CD14-positive monocyte (primary cell): ENCODE measurements at regions of chr17 and their contacts with region 1.

Region 1: GRCh38 chr17:4709794-4710692 is at the start of gene ARRB2:
- DNase-seq: peak; percentile 97 to 99 (median 98)
- H3K4me3 ChIP-seq: peak within 1 kb of the TSS; percentile 74 to 99 (median 93)
- H3K4me3 Mint-ChIP-seq: peak within 1 kb of the TSS; percentile 97 to 98
- H3K27ac ChIP-seq: peak within 1 kb of the TSS; percentile 93 to 98
- H3K27ac Mint-ChIP-seq: peak within 1 kb of the TSS; percentile 97 to 99 (median 99)
- H3K4me1 ChIP-seq: peaks cover 44 to 50% of the 10 kb centered on the region in 2 donors
- H3K4me1 Mint-ChIP-seq: peaks cover 46% of the 10 kb centered on the region
- H3K27me3 ChIP-seq: no peaks in the 10 kb centered on the region
- H3K27me3 Mint-ChIP-seq: peaks cover 0 to 4% (median 0%) of the 10 kb centered on the region in 3 donors
- CTCF ChIP-seq: peak; percentile 82
- polyA plus RNA-seq, gene ARRB2: 134 to 760 (median 150) TPM

Region 2: GRCh38 chr17:4648741-4649140 is 61.3 kb before region 1 on chr17:
- intact Hi-C with region 1: no loop called
- DNase-seq: peak in 1 of 3 donors; percentile 5
- H3K4me3 ChIP-seq: no peak overlapping the region
- H3K4me3 Mint-ChIP-seq: peak overlapping the region; percentile 25 to 46
- H3K27ac ChIP-seq: no peak overlapping the region
- H3K27ac Mint-ChIP-seq: no peak overlapping the region
- H3K4me1 ChIP-seq: peaks cover 32 to 39% of the 10 kb centered on the region in 2 donors
- H3K4me1 Mint-ChIP-seq: peaks cover 53% of the 10 kb centered on the region
- H3K27me3 ChIP-seq: peaks cover 7 to 13% of the 10 kb centered on the region in 2 donors
- H3K27me3 Mint-ChIP-seq: peaks cover 12 to 22% (median 19%) of the 10 kb centered on the region in 3 donors
- CTCF ChIP-seq: no peak

Region 3: DNA sequence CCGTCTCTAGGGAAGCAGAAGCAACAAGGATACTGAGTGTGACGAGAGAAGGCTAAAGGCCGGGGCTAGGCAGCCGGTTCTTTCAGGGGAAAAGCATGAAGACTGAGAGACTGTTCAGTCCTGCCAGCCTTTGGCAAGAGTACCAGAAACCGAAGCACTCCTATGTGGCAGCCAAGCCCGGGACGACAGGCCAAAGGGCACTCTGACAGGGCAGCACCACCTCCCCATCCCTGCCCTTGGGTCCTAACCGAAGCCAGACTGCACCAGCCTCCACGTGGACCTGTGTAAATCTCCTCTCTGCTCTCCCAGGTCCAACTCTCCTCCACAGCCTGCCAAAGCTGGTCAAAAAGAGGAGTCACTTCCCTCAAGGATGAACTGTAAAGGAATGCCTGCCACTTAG is 45.0 kb before region 1 on chr17:
- intact Hi-C with region 1: no loop called
- DNase-seq: no peak
- H3K4me3 ChIP-seq: no peak overlapping the region
- H3K4me3 Mint-ChIP-seq: no peak overlapping the region
- H3K27ac ChIP-seq: no peak overlapping the region
- H3K27ac Mint-ChIP-seq: no peak overlapping the region
- H3K4me1 ChIP-seq: no peaks in the 10 kb centered on the region
- H3K4me1 Mint-ChIP-seq: peaks cover 4% of the 10 kb centered on the region
- H3K27me3 ChIP-seq: peaks cover 0 to 6% of the 10 kb centered on the region in 2 donors
- H3K27me3 Mint-ChIP-seq: peaks cover 10 to 32% (median 13%) of the 10 kb centered on the region in 3 donors
- CTCF ChIP-seq: no peak

Region 4: GRCh38 chr17:4771519-4772234 is 61.6 kb after region 1 on chr17 and contains the start of gene TM4SF5:
- intact Hi-C with region 1: no loop called
- DNase-seq: no peak
- H3K4me3 ChIP-seq: no peak within 1 kb of the TSS
- H3K4me3 Mint-ChIP-seq: peak within 1 kb of the TSS in 1 of 2 donors; percentile 42
- H3K27ac ChIP-seq: peak within 1 kb of the TSS; percentile 51 to 98
- H3K27ac Mint-ChIP-seq: peak within 1 kb of the TSS; percentile 86 to 97 (median 94)
- H3K4me1 ChIP-seq: peaks cover 46 to 52% of the 10 kb centered on the region in 2 donors
- H3K4me1 Mint-ChIP-seq: peaks cover 45% of the 10 kb centered on the region
- H3K27me3 ChIP-seq: no peaks in the 10 kb centered on the region
- H3K27me3 Mint-ChIP-seq: peaks cover 4 to 31% (median 25%) of the 10 kb centered on the region in 3 donors
- CTCF ChIP-seq: no peak
- polyA plus RNA-seq, gene TM4SF5: not detected

Region 5: DNA sequence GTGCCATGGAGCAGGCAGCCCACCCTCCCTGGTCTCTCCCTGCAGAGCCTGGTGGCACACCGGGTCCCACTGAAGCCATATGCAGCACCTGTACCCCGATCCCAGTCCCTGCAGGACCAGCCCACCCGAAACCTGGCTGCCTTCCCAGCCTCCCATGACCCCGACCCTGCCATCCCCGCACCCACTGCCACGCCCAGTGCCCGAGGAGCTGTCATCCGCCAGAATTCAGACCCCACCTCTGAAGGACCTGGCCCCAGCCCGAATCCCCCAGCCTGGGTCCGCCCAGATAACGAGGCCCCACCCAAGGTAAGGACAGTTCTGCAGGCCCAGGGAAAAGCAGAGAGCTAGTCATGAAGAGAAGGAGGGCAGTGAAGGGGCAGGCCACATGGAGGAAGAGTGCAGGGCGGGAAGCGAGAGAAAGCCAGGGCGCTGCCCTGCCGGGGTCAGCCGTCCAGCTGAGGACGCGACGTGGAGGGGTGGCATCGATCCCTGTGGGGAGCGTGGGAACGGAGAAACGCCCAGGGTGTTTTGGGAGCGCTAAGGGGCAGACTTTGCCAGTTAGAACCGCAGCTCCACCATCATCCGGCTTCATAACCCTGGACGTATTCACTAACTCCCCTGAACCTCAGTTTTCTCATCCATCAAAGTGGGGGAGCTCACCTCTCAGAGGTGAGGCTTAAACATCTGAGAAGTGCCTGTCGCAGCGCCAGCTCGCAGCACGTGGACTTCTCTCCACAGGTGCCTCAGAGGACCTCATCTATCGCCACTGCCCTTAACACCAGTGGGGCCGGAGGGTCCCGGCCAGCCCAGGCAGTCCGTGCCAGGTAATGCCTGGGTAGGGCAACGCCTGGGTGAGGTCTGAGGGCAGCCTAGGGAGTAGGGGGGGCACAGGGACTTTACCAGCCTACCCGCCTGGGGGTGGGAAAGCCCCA is 181.6 kb after region 1 on chr17:
- intact Hi-C with region 1: loop called (anchors 1 kb)
- DNase-seq: peak in 1 of 3 donors; percentile 3
- H3K4me3 ChIP-seq: no peak overlapping the region
- H3K4me3 Mint-ChIP-seq: no peak overlapping the region
- H3K27ac ChIP-seq: no peak overlapping the region
- H3K27ac Mint-ChIP-seq: peak overlapping the region in 1 of 7 donors; percentile 66
- H3K4me1 ChIP-seq: no peaks in the 10 kb centered on the region
- H3K4me1 Mint-ChIP-seq: peaks cover 2% of the 10 kb centered on the region
- H3K27me3 ChIP-seq: no peaks in the 10 kb centered on the region
- H3K27me3 Mint-ChIP-seq: peaks cover 0 to 3% (median 0%) of the 10 kb centered on the region in 3 donors
- CTCF ChIP-seq: no peak